Pancreas (tissue), 10 donors: ENCODE measurements at regions of chr13 and their contacts with region 1.

Region 1: GRCh38 chr13:87274209-87274819 is 396.9 kb upstream of the SLITRK5 start:
- DNase-seq: peak in 3 of 6 donors; percentile 7 to 25 (median 14)
- ATAC-seq: peak in 3 of 4 donors; percentile 45 to 54 (median 52)
- H3K4me3 ChIP-seq: no peak overlapping the region
- H3K27ac ChIP-seq: no peak overlapping the region
- H3K4me1 ChIP-seq: no peaks in the 10 kb centered on the region
- H3K27me3 ChIP-seq: no peaks in the 10 kb centered on the region
- CTCF ChIP-seq: peak in 2 of 4 donors; percentile 34 to 40

Region 2: GRCh38 chr13:86870444-86870843 is 403.9 kb before region 1 on chr13:
- intact Hi-C with region 1: loop called in 1 of 3 experiments (anchors 10 kb)
- DNase-seq: no peak
- ATAC-seq: no peak
- H3K4me3 ChIP-seq: no peak overlapping the region
- H3K27ac ChIP-seq: no peak overlapping the region
- H3K4me1 ChIP-seq: no peaks in the 10 kb centered on the region
- H3K27me3 ChIP-seq: no peaks in the 10 kb centered on the region
- CTCF ChIP-seq: peak; percentile 20 to 58 (median 54)